ENCODE measurements at regions of chr11 and their contacts with region 1.

Region 1: DNA sequence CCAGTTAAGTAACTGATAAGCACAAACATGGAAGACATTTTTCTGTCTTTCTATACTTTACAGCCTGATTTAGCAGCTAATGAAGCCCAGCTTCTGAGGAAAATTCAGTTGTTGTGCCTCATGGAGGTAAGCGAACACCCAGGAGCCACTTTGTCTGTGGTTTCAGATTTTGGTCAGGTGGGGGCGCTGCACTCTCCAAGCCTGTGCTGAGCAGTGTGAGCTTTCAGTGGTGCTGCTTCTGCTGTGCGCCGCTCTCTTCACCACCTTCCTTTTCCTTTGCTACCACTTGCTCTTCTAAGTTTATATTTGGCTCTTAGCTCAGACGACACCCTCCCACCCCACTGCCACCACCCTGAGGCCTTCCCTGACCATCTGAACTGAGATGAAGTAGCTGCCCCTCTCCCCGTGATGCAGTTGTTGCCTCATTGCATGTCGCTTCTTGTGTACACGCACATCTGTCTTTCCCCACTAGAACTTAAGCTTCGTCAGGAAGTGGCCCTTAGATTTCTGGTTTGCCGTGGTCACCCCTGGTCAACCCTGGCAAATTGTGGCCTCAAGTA is 14.0 kb downstream of the PSMD13 start:
- DNase-seq: peak; percentile 60
- ATAC-seq: peak; percentile 96
- H3K4me3 Mint-ChIP-seq: no peak overlapping the region
- H3K27ac Mint-ChIP-seq: peak overlapping the region; percentile 36
- H3K4me1 Mint-ChIP-seq: peaks cover 2% of the 10 kb centered on the region
- H3K27me3 Mint-ChIP-seq: no peaks in the 10 kb centered on the region
- CTCF ChIP-seq: peak; percentile 29

Region 2: GRCh38 chr11:279966-280582 is 29.3 kb after region 1 on chr11:
- CTCF ChIA-PET with region 1: interaction called, 21 read pairs
- POLR2A ChIA-PET with region 1: interaction called, 3 read pairs
- intact Hi-C with region 1: loop called (anchors 1 kb)
- DNase-seq: peak; percentile 43
- ATAC-seq: peak; percentile 71
- H3K4me3 Mint-ChIP-seq: peak overlapping the region; percentile 74
- H3K27ac Mint-ChIP-seq: no peak overlapping the region
- H3K4me1 Mint-ChIP-seq: peaks cover 32% of the 10 kb centered on the region
- H3K27me3 Mint-ChIP-seq: peaks cover 19% of the 10 kb centered on the region
- CTCF ChIP-seq: no peak

Region 3: DNA sequence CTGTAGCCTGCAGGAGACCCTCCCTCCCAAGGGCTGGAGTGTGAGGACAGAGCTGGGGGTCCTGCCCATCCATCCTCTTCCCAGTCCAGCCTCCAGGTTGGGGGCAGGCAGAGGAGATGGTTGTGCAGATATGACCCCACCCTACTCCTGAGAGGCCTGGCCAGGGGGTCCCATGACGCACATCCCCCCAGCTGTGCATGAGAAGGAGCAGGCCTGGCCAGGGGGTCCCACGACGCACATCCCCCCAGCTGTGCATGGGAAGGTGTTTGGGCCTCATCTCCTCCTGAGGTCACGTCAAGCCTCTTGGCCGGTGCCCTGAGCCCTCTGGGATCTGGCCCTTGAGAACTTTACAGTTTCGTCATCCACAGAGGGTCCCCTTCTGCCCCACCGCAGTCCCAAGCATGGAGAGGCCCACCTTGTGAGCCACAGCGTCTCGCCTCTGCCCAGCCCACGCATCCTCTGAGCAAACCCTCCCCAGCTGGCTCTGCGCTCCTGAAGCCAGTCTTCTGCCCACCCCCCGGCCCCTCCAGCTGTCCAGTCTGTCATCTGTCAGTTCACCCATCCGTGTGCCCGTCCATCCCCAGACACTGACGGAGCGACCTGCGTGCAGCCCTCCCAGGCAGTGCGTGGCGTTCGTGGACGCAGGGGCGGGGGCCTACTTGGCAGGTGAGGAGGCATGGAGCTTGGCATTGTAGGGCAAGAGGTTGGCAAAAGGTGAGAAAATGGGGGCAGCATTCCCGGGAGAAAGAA is 188.7 kb after region 1 on chr11:
- CTCF ChIA-PET with region 1: no interaction called
- POLR2A ChIA-PET with region 1: no interaction called
- intact Hi-C with region 1: no loop called
- DNase-seq: no peak
- ATAC-seq: no peak
- H3K4me3 Mint-ChIP-seq: no peak overlapping the region
- H3K27ac Mint-ChIP-seq: no peak overlapping the region
- H3K4me1 Mint-ChIP-seq: peaks cover 13% of the 10 kb centered on the region
- H3K27me3 Mint-ChIP-seq: no peaks in the 10 kb centered on the region
- CTCF ChIP-seq: no peak